K562 (cell line): ENCODE measurements at regions of chr7 and their contacts with region 1.

Region 1: DNA sequence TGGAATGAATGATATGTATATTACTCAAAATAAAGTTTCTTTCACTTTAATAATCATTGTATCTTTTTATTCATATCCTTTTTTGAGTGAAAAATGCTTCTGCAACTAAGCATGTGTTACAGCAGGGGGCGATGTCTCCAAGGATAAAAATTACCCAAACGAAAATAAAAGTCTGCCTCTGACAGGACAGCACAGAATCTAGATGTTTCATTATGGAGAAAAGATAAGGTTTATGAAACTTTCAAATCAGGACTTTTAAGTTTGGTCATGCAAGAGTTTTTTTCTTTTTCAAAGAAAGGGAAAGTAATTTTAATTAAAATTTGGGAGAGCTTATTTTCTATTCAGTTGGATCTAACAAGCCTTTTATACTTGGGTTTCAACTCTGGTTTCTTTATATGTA is 48.4 kb downstream of the TES start:
- DNase-seq: peak; percentile 53 to 73 (median 66)
- ATAC-seq: peak; percentile 75
- H3K4me3 ChIP-seq: no peak overlapping the region
- H3K27ac ChIP-seq: no peak overlapping the region
- H3K4me1 ChIP-seq: no peaks in the 10 kb centered on the region
- H3K27me3 ChIP-seq: no peaks in the 10 kb centered on the region
- CTCF ChIP-seq: peak; percentile 78 to 97 (median 78)
- EP300 ChIP-seq: no peak
- POLR2A ChIP-seq: no peak
- RAD21 ChIP-seq: peak; percentile 96 to 99

Region 2: DNA sequence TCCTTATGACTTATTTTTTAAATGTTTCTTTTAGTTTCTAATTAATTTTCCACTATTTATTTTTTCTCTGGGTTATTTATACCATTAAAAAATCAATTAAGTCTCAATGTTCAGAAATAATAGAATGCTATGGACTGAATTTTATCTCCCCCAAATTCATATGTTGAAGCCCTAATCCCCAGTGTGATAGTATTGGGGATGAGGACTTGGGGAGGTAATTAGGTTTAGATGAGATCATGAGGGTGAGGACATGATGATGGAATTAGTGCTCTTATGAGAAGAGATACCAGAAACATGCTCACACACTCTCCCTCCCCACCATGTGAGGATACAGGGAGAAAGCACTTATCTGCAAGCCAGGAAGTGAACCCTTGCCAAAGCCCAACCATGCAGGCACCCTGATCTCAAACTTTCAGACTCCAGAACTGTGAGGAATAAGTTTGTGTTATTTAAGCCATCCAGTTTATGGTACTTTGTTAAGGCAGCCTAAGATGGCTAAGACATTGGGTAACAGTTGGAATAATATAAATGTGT is 1134.3 kb before region 1 on chr7:
- CTCF ChIA-PET with region 1: no interaction called
- POLR2A ChIA-PET with region 1: no interaction called
- in situ Hi-C with region 1: no loop called
- intact Hi-C with region 1: no loop called
- DNase-seq: no peak
- ATAC-seq: no peak
- H3K4me3 ChIP-seq: no peak overlapping the region
- H3K27ac ChIP-seq: no peak overlapping the region
- H3K4me1 ChIP-seq: no peaks in the 10 kb centered on the region
- H3K27me3 ChIP-seq: no peaks in the 10 kb centered on the region
- CTCF ChIP-seq: no peak
- EP300 ChIP-seq: no peak
- POLR2A ChIP-seq: no peak
- RAD21 ChIP-seq: no peak

Region 3: DNA sequence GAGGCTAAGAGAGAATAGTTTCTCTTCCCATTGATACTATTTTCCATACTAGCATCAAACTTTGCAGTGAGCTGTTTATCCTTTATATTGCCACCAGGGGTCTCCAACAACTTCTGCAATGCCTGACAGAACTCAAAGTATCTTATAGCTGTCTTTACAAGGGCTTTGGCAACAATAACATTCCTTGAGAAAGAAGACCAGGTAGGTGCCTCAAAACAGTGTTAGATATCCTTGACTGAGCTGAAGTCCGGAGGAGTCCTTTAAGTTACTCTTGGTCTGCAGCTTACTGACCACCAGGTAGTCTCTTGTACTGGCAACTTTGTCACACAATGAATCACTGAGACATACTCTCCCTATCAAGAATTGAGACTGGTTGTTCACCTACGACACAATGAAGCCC is 78.4 kb before region 1 on chr7:
- CTCF ChIA-PET with region 1: no interaction called
- POLR2A ChIA-PET with region 1: interaction called, 3 read pairs
- in situ Hi-C with region 1: no loop called
- intact Hi-C with region 1: loop called (anchors 1 kb)
- DNase-seq: peak; percentile 39 to 62 (median 48)
- ATAC-seq: peak; percentile 93
- H3K4me3 ChIP-seq: no peak overlapping the region
- H3K27ac ChIP-seq: no peak overlapping the region
- H3K4me1 ChIP-seq: peaks cover 0 to 5% of the 10 kb centered on the region in 2 experiments; a peak in 1 of 5 replicates
- H3K27me3 ChIP-seq: no peaks in the 10 kb centered on the region
- CTCF ChIP-seq: peak; percentile 70 to 92 (median 79)
- EP300 ChIP-seq: no peak
- POLR2A ChIP-seq: no peak
- RAD21 ChIP-seq: peak; percentile 98 to 99

Region 4: DNA sequence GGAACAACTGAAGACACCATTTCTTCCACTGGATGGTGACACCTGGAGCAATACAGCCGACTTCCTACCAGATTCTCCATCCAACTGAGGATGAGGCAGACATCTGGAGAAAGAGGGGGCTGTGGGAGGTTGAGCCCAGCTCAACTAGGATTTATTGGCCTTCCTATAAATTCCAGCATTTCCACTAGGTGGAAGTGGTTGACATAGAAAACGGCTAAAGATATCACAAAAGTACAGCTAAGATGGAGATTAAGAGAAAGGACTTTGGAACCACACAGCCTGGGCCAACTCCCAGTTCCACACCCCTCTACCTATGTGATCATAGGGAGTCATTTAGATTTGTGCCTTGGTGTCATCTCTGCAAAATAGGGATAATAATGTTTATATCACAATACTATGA is 179.5 kb after region 1 on chr7:
- CTCF ChIA-PET with region 1: no interaction called
- POLR2A ChIA-PET with region 1: no interaction called
- in situ Hi-C with region 1: no loop called
- intact Hi-C with region 1: loop called (anchors 2 kb)
- DNase-seq: peak in 2 of 4 experiments; percentile 20 to 49
- ATAC-seq: peak; percentile 79
- H3K4me3 ChIP-seq: no peak overlapping the region
- H3K27ac ChIP-seq: no peak overlapping the region
- H3K4me1 ChIP-seq: peaks cover 8 to 25% of the 10 kb centered on the region in 2 experiments; a peak in 3 of 5 replicates
- H3K27me3 ChIP-seq: no peaks in the 10 kb centered on the region; a peak in 1 of 5 replicates
- CTCF ChIP-seq: peak; percentile 32 to 71 (median 50); a peak in 4 of 6 replicates
- EP300 ChIP-seq: no peak
- POLR2A ChIP-seq: no peak
- RAD21 ChIP-seq: peak; percentile 70 to 80

Region 5: DNA sequence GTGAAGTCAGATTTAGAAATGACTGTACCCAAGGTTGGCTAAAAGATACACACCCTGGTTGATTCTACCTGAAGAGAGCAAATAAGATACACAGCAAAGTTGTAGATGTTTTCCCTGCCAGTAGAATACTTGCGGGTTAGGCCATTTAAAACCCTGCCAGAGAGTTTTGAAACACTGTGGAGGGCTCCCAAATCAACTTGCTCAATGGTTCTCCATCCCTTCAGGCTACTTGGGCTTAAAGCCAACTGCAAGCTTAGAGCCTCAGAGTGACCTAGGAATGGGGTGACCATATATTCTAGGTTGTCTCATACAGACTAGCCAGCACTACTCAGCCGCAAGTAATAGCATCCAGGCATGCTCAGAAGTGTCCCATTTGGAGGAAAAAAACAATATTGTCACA is 276.1 kb after region 1 on chr7:
- CTCF ChIA-PET with region 1: no interaction called
- POLR2A ChIA-PET with region 1: no interaction called
- in situ Hi-C with region 1: loop called (anchors 5 kb)
- intact Hi-C with region 1: no loop called
- DNase-seq: no peak
- ATAC-seq: 0 out of 3 replicates have a peak, but pooled peaks have one; percentile 18
- H3K4me3 ChIP-seq: no peak overlapping the region
- H3K27ac ChIP-seq: no peak overlapping the region
- H3K4me1 ChIP-seq: no peaks in the 10 kb centered on the region
- H3K27me3 ChIP-seq: peaks cover 4 to 13% of the 10 kb centered on the region in 2 experiments; a peak in 3 of 5 replicates
- CTCF ChIP-seq: no peak
- EP300 ChIP-seq: no peak
- POLR2A ChIP-seq: no peak
- RAD21 ChIP-seq: no peak

Region 6: GRCh38 chr7:116588641-116589594 is 330.2 kb after region 1 on chr7:
- CTCF ChIA-PET with region 1: interaction called, 97 read pairs
- POLR2A ChIA-PET with region 1: no interaction called
- in situ Hi-C with region 1: no loop called
- intact Hi-C with region 1: loop called (anchors 1 kb)
- DNase-seq: peak; percentile 52 to 75 (median 64)
- ATAC-seq: peak; percentile 85
- H3K4me3 ChIP-seq: no peak overlapping the region
- H3K27ac ChIP-seq: no peak overlapping the region
- H3K4me1 ChIP-seq: peaks cover 0 to 9% of the 10 kb centered on the region in 2 experiments; a peak in 3 of 5 replicates
- H3K27me3 ChIP-seq: peaks cover 10% of the 10 kb centered on the region in 2 experiments; a peak in 3 of 5 replicates
- CTCF ChIP-seq: peak; percentile 45 to 95 (median 65); a peak in 4 of 6 replicates
- EP300 ChIP-seq: no peak
- POLR2A ChIP-seq: no peak
- RAD21 ChIP-seq: peak; percentile 98